Right lobe of liver (tissue), 6 donors: ENCODE measurements at regions of chr2 and their contacts with region 1.

Region 1: DNA sequence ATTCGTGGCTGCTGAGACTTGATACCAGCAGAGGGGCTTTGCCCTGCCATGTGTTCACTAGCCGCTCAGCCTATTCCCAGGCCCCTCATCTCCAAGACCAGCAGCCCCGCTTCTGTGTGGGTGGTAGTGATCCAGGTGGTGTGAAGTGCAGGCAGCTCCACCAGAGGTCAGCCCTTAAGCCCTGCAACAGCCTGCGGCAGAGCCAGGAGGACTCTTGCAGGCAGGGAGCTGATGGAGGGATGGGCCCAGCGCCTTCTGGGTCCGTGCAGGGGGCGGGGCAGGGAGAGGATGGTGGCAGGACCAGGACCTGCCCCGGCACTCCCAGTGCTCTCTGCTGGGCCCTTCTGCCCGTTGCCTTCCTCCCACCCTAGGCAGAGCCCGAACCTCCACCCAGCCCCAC is 162.0 kb downstream of the SH3BP4 start:
- DNase-seq: no peak
- ATAC-seq: peak in 1 of 4 donors; percentile 31
- H3K4me3 ChIP-seq: no peak overlapping the region
- H3K27ac ChIP-seq: no peak overlapping the region
- H3K4me1 ChIP-seq: no peaks in the 10 kb centered on the region
- H3K27me3 ChIP-seq: no peaks in the 10 kb centered on the region
- CTCF ChIP-seq: no peak
- POLR2A ChIP-seq: no peak

Region 2: GRCh38 chr2:234544659-234545611 is 568.9 kb before region 1 on chr2:
- intact Hi-C with region 1: loop called in 1 of 2 experiments (anchors 5 kb)
- DNase-seq: peak; percentile 62 to 68 (median 68)
- ATAC-seq: peak; percentile 92 to 96 (median 94)
- H3K4me3 ChIP-seq: no peak overlapping the region
- H3K27ac ChIP-seq: no peak overlapping the region
- H3K4me1 ChIP-seq: no peaks in the 10 kb centered on the region
- H3K27me3 ChIP-seq: no peaks in the 10 kb centered on the region
- CTCF ChIP-seq: peak; percentile 77 to 94 (median 91)
- POLR2A ChIP-seq: no peak

Region 3: DNA sequence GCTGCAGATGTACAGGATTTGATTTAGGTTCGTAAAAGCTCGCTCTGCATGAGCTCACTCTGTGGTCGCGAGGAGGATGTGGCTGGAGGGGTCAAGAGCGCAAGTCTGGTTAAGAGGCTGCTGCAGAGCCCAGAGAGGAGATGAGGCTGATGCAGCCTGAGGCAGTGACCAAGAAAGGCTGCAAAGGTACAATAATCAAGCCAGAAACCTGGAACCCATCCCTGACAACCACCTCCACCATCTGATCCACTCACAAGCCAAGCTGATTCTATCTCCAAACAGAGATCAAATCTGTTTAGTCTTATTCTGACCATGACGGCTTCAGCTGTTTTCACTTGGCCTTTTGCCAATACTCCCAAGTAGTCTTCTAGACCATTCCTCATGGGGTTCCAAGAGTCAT is 558.1 kb before region 1 on chr2:
- intact Hi-C with region 1: loop called in 1 of 2 experiments (anchors 5 kb)
- DNase-seq: no peak
- ATAC-seq: no peak
- H3K4me3 ChIP-seq: no peak overlapping the region
- H3K27ac ChIP-seq: no peak overlapping the region
- H3K4me1 ChIP-seq: no peaks in the 10 kb centered on the region
- H3K27me3 ChIP-seq: no peaks in the 10 kb centered on the region
- CTCF ChIP-seq: no peak
- POLR2A ChIP-seq: no peak

Region 4: DNA sequence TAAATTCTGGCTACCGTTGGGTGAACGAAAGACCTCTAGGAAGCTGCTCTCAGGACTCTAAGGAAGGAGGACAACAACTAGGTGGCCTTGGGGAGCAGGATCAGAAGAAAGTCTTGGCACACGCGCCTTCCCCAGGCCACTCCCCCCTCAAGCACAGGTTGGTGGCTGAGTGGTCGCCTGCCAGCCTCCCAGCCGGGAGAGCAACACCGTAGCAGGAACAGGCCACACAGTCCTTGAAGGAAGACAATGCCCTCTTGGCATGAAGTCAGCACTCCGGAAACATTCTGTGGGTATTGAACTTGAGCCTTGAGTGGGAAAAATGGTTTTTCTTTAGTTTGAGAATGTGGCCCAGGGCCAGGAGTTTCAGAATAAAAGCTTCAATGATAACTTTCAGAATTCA is 292.6 kb after region 1 on chr2:
- intact Hi-C with region 1: no loop called
- DNase-seq: no peak
- ATAC-seq: no peak
- H3K4me3 ChIP-seq: no peak overlapping the region
- H3K27ac ChIP-seq: no peak overlapping the region
- H3K4me1 ChIP-seq: no peaks in the 10 kb centered on the region
- H3K27me3 ChIP-seq: no peaks in the 10 kb centered on the region
- CTCF ChIP-seq: no peak
- POLR2A ChIP-seq: no peak